Activated B cell treated with CpG ODN at 0.5 μM for 24 hours (primary cell): ENCODE measurements at regions of chr3 and their contacts with region 1.

Region 1: DNA sequence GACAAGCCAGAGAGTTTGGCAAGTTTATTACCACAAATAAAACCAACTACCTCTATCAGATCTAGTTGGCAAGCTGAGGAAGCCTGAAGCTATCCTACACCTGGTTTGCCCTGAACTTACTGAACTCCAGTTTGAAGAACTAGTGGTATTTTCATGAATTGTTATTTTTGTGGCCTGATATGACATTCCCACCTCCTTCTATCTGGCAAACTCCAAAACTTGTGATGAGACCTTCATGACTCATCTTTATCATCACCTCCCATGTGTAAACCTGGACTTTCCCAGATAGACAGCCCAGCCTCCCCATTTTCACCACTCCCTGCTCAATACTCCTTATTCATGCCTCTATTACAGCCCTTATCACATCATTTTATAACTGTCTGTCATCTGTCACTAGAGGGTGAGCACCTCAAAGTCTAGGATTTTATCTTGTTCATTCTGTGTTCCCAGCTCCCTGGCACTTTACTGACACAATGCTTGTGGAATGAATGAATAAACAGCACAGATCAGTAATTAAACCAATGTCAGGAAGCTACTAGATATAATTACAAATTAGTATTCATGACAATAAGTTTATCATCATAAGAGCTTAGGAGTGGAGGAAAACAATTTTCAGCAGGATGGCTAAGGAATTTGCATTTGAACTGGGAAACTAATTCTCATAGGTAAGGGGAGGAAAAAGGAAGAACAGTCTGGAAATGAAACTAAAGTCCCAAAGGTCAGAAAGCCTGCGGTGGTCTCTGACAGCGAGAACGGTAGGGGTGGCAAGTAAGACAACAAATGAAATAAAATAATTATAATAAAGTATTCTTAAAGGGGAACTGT is 13.2 kb upstream of the TRANK1 start:
- DNase-seq: no peak
- ATAC-seq: no peak
- H3K4me3 Mint-ChIP-seq: no peak overlapping the region
- H3K27ac Mint-ChIP-seq: peak overlapping the region; percentile 33
- H3K4me1 Mint-ChIP-seq: peaks cover 20% of the 10 kb centered on the region
- H3K27me3 Mint-ChIP-seq: no peaks in the 10 kb centered on the region
- CTCF ChIP-seq: no peak

Region 2: GRCh38 chr3:36792342-36792741 is 165.7 kb before region 1 on chr3:
- CTCF ChIA-PET with region 1: interaction called, 9 read pairs
- POLR2A ChIA-PET with region 1: no interaction called
- intact Hi-C with region 1: loop called (anchors 1 kb)
- DNase-seq: no peak
- ATAC-seq: peak; percentile 37
- H3K4me3 Mint-ChIP-seq: no peak overlapping the region
- H3K27ac Mint-ChIP-seq: no peak overlapping the region
- H3K4me1 Mint-ChIP-seq: no peaks in the 10 kb centered on the region
- H3K27me3 Mint-ChIP-seq: peaks cover 7% of the 10 kb centered on the region
- CTCF ChIP-seq: no peak

Region 3: DNA sequence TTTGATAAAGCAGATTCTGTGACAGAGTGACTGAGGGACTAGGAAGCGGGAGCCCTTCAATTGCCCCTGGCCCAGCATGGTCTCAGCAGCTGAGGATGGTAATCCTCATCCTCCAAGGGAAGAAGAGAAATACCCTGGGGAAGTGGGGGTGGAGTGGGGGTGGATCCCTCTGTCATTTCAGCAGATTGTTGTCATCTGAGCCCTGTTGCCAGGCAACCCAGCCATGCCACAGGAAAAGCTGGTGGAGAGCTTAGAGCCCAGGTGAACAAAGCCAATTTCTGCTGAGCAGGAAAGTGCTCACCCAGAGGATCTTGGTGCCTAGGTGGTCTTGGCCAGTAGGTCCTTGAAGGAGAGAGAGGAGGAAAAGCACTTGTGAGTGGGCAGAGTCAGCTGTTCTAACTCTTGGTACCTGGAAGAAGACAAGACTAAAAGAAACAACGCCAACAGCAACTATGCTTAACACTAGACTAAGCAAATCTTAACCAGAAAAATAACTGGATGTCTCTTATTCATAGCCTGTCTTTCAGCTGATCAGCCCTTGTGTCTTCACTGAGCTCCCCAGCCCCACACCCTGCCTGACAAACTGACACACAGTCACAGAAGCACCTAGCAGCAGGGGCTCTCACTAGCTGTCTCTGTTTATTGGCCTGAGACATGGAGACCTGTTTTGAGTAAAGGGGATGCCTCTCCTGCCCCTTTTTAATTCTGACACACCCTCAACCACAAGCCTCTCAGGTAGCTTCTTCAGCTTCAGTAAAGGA is 153.6 kb before region 1 on chr3:
- CTCF ChIA-PET with region 1: no interaction called
- POLR2A ChIA-PET with region 1: no interaction called
- intact Hi-C with region 1: no loop called
- DNase-seq: no peak
- ATAC-seq: no peak
- H3K4me3 Mint-ChIP-seq: no peak overlapping the region
- H3K27ac Mint-ChIP-seq: no peak overlapping the region
- H3K4me1 Mint-ChIP-seq: no peaks in the 10 kb centered on the region
- H3K27me3 Mint-ChIP-seq: peaks cover 45% of the 10 kb centered on the region
- CTCF ChIP-seq: no peak

Region 4: DNA sequence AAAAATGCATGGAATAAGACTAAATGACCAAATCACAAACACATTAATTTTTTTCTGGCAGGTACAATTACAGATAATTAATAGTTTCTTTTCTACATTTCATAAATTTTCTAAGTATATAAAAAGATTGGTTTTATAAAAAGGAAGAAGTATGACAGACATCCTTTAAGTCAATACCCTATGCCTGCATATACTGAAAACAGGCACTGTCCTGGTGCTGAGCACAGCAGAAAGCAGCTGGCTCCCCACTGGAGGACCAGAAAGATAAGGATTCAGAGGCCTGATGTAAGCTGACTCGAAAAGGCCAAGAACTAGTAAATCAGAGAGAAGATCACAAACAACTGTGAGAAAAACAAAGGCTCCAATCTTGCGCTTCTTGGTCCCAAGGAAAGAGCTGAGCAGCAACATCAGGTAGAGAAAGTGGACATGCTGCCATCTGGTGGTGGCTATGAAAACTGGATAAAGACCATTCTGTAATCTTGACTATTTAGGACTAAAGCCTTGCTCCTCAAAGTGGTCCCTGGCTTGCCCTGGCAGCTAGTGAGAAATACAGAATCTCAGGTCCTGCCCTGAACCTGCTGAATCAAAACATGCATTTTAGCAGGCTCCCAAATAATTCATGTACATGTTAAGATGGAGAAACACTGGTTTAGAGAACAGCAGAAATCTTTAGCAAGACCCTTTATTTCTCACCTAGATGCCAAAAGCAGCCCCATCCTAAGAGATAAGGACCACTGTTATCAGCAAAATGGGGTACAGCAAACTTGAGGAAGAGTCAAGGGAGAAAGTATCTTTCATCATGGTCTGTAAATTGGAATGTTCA is 89.2 kb before region 1 on chr3:
- CTCF ChIA-PET with region 1: interaction called, 70 read pairs
- POLR2A ChIA-PET with region 1: interaction called, 6 read pairs
- intact Hi-C with region 1: loop called (anchors 1 kb)
- DNase-seq: no peak
- ATAC-seq: peak; percentile 88
- H3K4me3 Mint-ChIP-seq: no peak overlapping the region
- H3K27ac Mint-ChIP-seq: peak overlapping the region; percentile 59
- H3K4me1 Mint-ChIP-seq: peaks cover 23% of the 10 kb centered on the region
- H3K27me3 Mint-ChIP-seq: no peaks in the 10 kb centered on the region
- CTCF ChIP-seq: peak; percentile 87

Region 5: GRCh38 chr3:36904641-36905040 is 53.4 kb before region 1 on chr3:
- CTCF ChIA-PET with region 1: interaction called, 71 read pairs
- POLR2A ChIA-PET with region 1: interaction called, 6 read pairs
- intact Hi-C with region 1: loop called (anchors 1 kb)
- DNase-seq: no peak
- ATAC-seq: no peak
- H3K4me3 Mint-ChIP-seq: peak overlapping the region; percentile 55
- H3K27ac Mint-ChIP-seq: peak overlapping the region; percentile 74
- H3K4me1 Mint-ChIP-seq: peaks cover 88% of the 10 kb centered on the region
- H3K27me3 Mint-ChIP-seq: no peaks in the 10 kb centered on the region
- CTCF ChIP-seq: no peak

Region 6: GRCh38 chr3:36937492-36937891 is 20.6 kb before region 1 on chr3:
- CTCF ChIA-PET with region 1: interaction called, 13 read pairs
- POLR2A ChIA-PET with region 1: interaction called, 11 read pairs
- intact Hi-C with region 1: no loop called
- DNase-seq: no peak
- ATAC-seq: no peak
- H3K4me3 Mint-ChIP-seq: no peak overlapping the region
- H3K27ac Mint-ChIP-seq: no peak overlapping the region
- H3K4me1 Mint-ChIP-seq: peaks cover 12% of the 10 kb centered on the region
- H3K27me3 Mint-ChIP-seq: no peaks in the 10 kb centered on the region
- CTCF ChIP-seq: no peak

Region 7: DNA sequence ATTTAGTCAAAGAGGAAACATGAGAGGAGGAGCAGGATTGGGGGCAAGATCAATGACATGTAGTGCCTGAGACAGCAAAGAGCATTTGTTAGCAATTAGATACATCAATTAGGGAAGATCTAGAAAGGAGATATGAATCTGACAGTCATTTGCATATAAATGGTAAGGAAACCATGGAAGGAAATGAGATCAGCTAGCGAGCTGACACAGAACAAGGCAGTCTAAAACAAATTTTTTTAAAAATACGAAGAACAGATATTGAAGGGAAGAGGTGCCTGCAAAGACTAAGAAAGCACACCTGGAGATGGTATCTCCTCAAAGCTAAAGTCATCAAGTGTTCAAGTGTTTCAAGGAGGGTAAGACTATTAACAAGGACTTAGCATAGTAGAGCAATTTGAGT is 30.3 kb after region 1 on chr3:
- CTCF ChIA-PET with region 1: interaction called, 16 read pairs
- POLR2A ChIA-PET with region 1: interaction called, 13 read pairs
- intact Hi-C with region 1: no loop called
- DNase-seq: no peak
- ATAC-seq: no peak
- H3K4me3 Mint-ChIP-seq: peak overlapping the region; percentile 76
- H3K27ac Mint-ChIP-seq: peak overlapping the region; percentile 65
- H3K4me1 Mint-ChIP-seq: peaks cover 37% of the 10 kb centered on the region
- H3K27me3 Mint-ChIP-seq: no peaks in the 10 kb centered on the region
- CTCF ChIP-seq: no peak